OCI-LY7 (cell line): ENCODE measurements at regions of chr11 and their contacts with region 1.

Region 1: GRCh38 chr11:67572747-67573419 is 10.7 kb upstream of the GSTP1 start:
- DNase-seq: peak; percentile 67
- H3K4me3 ChIP-seq: no peak overlapping the region
- H3K27ac ChIP-seq: no peak overlapping the region
- H3K4me1 ChIP-seq: peaks cover 6% of the 10 kb centered on the region
- CTCF ChIP-seq: peak; percentile 74

Region 2: GRCh38 chr11:67551127-67551526 is 21.8 kb before region 1 on chr11:
- CTCF ChIA-PET with region 1: no interaction called
- POLR2A ChIA-PET with region 1: no interaction called
- intact Hi-C with region 1: no loop called
- DNase-seq: no peak
- H3K4me3 ChIP-seq: no peak overlapping the region
- H3K27ac ChIP-seq: no peak overlapping the region
- H3K4me1 ChIP-seq: no peaks in the 10 kb centered on the region
- CTCF ChIP-seq: no peak

Region 3: GRCh38 chr11:67613960-67614715 is 41.3 kb after region 1 on chr11:
- CTCF ChIA-PET with region 1: no interaction called
- POLR2A ChIA-PET with region 1: no interaction called
- intact Hi-C with region 1: loop called (anchors 1 kb)
- DNase-seq: peak; percentile 97
- H3K4me3 ChIP-seq: peak overlapping the region; percentile 59
- H3K27ac ChIP-seq: peak overlapping the region; percentile 91
- H3K4me1 ChIP-seq: peaks cover 34% of the 10 kb centered on the region
- CTCF ChIP-seq: peak; percentile 76

Region 4: GRCh38 chr11:67665541-67666362 is 92.9 kb after region 1 on chr11:
- CTCF ChIA-PET with region 1: no interaction called
- POLR2A ChIA-PET with region 1: no interaction called
- intact Hi-C with region 1: no loop called
- DNase-seq: peak; percentile 35
- H3K4me3 ChIP-seq: no peak overlapping the region
- H3K27ac ChIP-seq: no peak overlapping the region
- H3K4me1 ChIP-seq: peaks cover 47% of the 10 kb centered on the region
- CTCF ChIP-seq: peak; percentile 60